ENCODE measurements at regions of chr9 and their contacts with region 1.

Region 1: GRCh38 chr9:73683862-73684591 is 532.4 kb downstream of the ANXA1 start:
- DNase-seq: peak; percentile 88
- H3K4me3 ChIP-seq: no peak overlapping the region
- H3K27ac ChIP-seq: peak overlapping the region; percentile 84
- H3K4me1 ChIP-seq: peaks cover 28% of the 10 kb centered on the region
- H3K27me3 ChIP-seq: no peaks in the 10 kb centered on the region
- CTCF ChIP-seq: peak; percentile 75 to 82

Region 2: DNA sequence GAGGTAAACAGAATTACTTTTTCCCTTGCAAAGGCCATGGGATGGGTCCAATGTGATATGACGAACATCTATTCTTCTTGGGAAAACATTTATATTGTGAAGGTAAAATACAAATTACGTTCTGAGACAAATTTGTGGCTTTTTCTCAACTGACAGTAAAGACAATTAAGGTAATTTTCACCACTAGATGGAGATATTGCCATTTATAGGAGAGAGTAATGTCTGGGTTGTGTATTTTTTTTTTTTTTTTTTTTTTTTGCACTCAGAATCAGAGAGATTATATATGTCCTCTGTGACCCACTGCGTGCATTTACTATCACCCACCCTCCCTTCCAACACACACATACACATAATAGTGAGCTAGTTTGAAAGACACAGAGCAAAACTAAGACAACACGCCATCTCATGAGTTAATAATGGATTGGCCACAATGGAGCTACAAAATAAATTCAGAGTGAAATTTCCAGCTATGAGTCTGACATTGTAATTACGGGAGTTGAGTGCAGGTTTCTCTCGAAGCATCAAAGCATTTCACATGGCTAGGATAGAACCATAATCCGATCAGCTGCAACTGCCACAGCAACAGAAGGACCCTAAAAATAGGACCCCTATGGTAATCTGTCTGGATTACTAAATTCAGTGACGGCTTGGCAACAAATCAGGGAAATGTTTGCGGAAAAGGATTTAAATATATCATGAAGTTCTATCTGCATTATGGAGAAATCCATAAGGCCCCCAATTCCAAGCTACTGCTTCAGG is 483.2 kb before region 1 on chr9:
- CTCF ChIA-PET with region 1: no interaction called
- dilution Hi-C with region 1: no loop called
- in situ Hi-C with region 1: no loop called
- intact Hi-C with region 1: loop called (anchors 5 kb)
- DNase-seq: no peak
- H3K4me3 ChIP-seq: no peak overlapping the region
- H3K27ac ChIP-seq: no peak overlapping the region
- H3K4me1 ChIP-seq: no peaks in the 10 kb centered on the region
- H3K27me3 ChIP-seq: no peaks in the 10 kb centered on the region
- CTCF ChIP-seq: peak; percentile 59 to 63

Region 3: DNA sequence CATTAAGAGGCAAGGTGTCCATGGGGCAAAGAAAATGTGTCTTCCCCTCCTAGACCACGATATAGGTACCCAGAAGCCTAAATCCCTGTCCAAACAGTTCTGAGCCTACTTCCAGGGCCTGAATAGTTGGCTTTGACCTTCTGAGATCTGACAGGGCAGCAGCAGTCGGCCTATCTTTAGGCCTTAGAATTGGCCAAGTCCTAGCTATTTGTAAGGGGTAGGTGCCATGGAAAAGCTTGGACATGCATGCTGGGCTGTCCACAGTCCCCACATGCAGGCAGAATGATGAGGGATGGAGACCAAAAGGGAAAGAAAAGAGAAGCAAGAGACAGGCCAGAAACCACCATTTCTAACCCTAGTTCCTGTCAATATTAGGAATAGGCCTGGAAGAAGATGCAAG is 186.2 kb before region 1 on chr9:
- CTCF ChIA-PET with region 1: no interaction called
- dilution Hi-C with region 1: no loop called
- in situ Hi-C with region 1: no loop called
- intact Hi-C with region 1: no loop called
- DNase-seq: no peak
- H3K4me3 ChIP-seq: no peak overlapping the region
- H3K27ac ChIP-seq: no peak overlapping the region
- H3K4me1 ChIP-seq: no peaks in the 10 kb centered on the region
- H3K27me3 ChIP-seq: no peaks in the 10 kb centered on the region
- CTCF ChIP-seq: no peak

Region 4: DNA sequence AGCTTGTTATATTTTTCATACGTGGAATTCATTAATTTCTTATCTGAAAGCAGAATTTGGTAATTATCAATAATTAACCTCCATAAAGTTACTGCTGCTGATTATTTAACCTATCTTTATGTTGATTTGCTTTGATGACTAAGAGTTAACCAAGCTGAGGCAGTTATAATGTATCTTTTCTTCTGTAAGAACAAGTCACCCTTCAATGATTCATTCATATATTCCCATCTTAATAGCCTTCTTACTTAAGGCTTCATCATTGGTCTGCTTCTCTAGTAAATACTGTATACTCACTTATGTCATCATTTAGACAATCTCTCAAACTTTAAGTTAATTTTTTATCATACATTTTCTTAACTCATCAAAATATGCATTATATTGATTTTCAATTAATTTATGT is 59.8 kb after region 1 on chr9:
- CTCF ChIA-PET with region 1: no interaction called
- dilution Hi-C with region 1: no loop called
- in situ Hi-C with region 1: no loop called
- intact Hi-C with region 1: loop called (anchors 2 kb)
- DNase-seq: peak; percentile 64
- H3K4me3 ChIP-seq: no peak overlapping the region
- H3K27ac ChIP-seq: no peak overlapping the region
- H3K4me1 ChIP-seq: no peaks in the 10 kb centered on the region
- H3K27me3 ChIP-seq: no peaks in the 10 kb centered on the region
- CTCF ChIP-seq: no peak

Region 5: GRCh38 chr9:74006935-74007334 is 322.9 kb after region 1 on chr9:
- CTCF ChIA-PET with region 1: no interaction called
- dilution Hi-C with region 1: no loop called
- in situ Hi-C with region 1: loop called (anchors 10 to 25 kb)
- intact Hi-C with region 1: loop called (anchors 1 kb)
- DNase-seq: no peak
- H3K4me3 ChIP-seq: no peak overlapping the region
- H3K27ac ChIP-seq: no peak overlapping the region
- H3K4me1 ChIP-seq: no peaks in the 10 kb centered on the region
- H3K27me3 ChIP-seq: no peaks in the 10 kb centered on the region
- CTCF ChIP-seq: peak in 1 of 2 donors; percentile 50

Region 6: GRCh38 chr9:74025402-74025894 is 341.4 kb after region 1 on chr9:
- CTCF ChIA-PET with region 1: interaction called, 12 read pairs
- dilution Hi-C with region 1: no loop called
- in situ Hi-C with region 1: loop called in 1 of 2 experiments (anchors 25 kb)
- intact Hi-C with region 1: no loop called
- DNase-seq: peak; percentile 79
- H3K4me3 ChIP-seq: no peak overlapping the region
- H3K27ac ChIP-seq: no peak overlapping the region
- H3K4me1 ChIP-seq: peaks cover 7% of the 10 kb centered on the region
- H3K27me3 ChIP-seq: no peaks in the 10 kb centered on the region
- CTCF ChIP-seq: no peak

Region 7: DNA sequence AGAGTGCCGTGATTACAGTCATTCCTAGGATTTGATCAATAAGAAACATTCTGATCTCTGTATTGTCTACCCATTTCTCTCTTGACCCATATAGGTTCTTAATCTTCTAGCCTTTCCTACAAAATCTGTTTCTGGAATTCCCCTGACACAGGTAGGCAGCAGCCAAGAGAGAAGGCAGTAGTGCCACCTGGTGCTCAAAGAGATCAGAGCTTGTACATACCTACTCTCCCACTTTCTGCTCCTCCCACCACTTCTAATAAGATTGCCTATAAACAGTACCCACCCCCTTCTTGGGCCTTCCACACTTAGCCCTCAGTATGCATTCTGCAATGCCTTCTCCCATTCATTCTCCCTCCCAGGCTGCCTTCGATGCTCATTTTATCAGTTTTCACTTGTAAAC is 695.7 kb after region 1 on chr9:
- CTCF ChIA-PET with region 1: interaction called, 4 read pairs
- dilution Hi-C with region 1: no loop called
- in situ Hi-C with region 1: loop called (anchors 5 to 10 kb)
- intact Hi-C with region 1: loop called (anchors 1 kb)
- DNase-seq: peak; percentile 66
- H3K4me3 ChIP-seq: no peak overlapping the region
- H3K27ac ChIP-seq: no peak overlapping the region
- H3K4me1 ChIP-seq: peaks cover 3% of the 10 kb centered on the region
- H3K27me3 ChIP-seq: no peaks in the 10 kb centered on the region
- CTCF ChIP-seq: peak; percentile 70 to 77

Region 8: GRCh38 chr9:74645007-74645639 is 961.1 kb after region 1 on chr9:
- CTCF ChIA-PET with region 1: no interaction called
- dilution Hi-C with region 1: no loop called
- in situ Hi-C with region 1: no loop called
- intact Hi-C with region 1: loop called (anchors 1 kb)
- DNase-seq: peak; percentile 5
- H3K4me3 ChIP-seq: no peak overlapping the region
- H3K27ac ChIP-seq: no peak overlapping the region
- H3K4me1 ChIP-seq: no peaks in the 10 kb centered on the region
- H3K27me3 ChIP-seq: no peaks in the 10 kb centered on the region
- CTCF ChIP-seq: peak; percentile 51 to 67